ENCODE measurements at regions of chr12 and their contacts with region 1.

Region 1: GRCh38 chr12:117063162-117063911 is 35.9 kb downstream of the TESC start:
- DNase-seq: peak; percentile 88
- ATAC-seq: peak; percentile 78
- H3K4me3 Mint-ChIP-seq: peak overlapping the region; percentile 57
- H3K27ac Mint-ChIP-seq: peak overlapping the region; percentile 97
- H3K4me1 Mint-ChIP-seq: peaks cover 85% of the 10 kb centered on the region
- H3K27me3 Mint-ChIP-seq: no peaks in the 10 kb centered on the region

Region 2: GRCh38 chr12:117025481-117026151 is 37.7 kb before region 1 on chr12:
- CTCF ChIA-PET with region 1: interaction called, 11 read pairs
- POLR2A ChIA-PET with region 1: no interaction called
- DNase-seq: peak; percentile 67
- ATAC-seq: peak; percentile 84
- H3K4me3 Mint-ChIP-seq: no peak overlapping the region
- H3K27ac Mint-ChIP-seq: peak overlapping the region; percentile 87
- H3K4me1 Mint-ChIP-seq: peaks cover 11% of the 10 kb centered on the region
- H3K27me3 Mint-ChIP-seq: no peaks in the 10 kb centered on the region

Region 3: DNA sequence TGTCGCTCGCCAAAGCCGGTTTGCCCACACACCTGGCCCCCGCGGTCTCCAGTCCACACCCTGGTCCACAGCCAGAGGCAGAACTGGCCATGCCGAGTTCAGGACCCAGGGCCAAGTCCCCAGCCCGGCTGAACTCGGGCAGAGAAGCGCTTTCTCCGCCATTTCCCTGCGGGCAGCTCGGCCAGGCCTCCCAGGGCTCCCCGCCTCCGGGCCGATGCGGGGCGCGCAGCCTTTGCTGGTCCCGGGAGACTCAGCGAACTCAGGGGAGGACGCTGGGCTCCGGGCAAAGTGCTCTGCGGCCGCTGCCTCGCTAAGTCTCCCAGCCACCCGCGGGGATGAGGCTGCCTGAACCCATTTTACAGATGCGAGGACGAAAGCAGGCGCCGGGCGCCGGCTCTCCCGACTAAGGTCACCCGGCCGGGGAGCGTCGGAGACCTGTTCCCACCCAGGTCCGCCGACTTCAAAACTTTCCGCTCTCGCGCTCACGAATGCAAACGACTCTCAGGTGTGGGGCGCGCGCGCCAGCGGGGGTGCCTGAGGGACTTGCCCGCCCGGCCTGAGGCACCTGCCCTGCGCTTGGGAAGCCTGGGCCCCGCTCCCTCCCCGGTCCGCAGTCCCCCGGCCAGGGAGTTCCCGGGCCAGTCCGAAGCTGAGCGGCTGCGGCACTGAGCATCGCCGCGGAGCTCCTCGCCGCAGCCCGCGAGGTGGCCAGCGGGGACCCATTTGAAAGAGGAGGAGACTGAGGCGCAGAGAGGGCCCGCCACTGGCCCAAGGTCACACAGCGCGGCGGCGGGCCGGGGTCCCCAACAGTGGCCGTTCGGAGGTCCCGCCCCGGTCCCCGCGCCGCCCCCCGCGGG is 35.3 kb after region 1 on chr12:
- CTCF ChIA-PET with region 1: interaction called, 14 read pairs
- POLR2A ChIA-PET with region 1: interaction called, 6 read pairs
- DNase-seq: peak; percentile 66
- ATAC-seq: peak; percentile 51
- H3K4me3 Mint-ChIP-seq: peak overlapping the region; percentile 85
- H3K27ac Mint-ChIP-seq: peak overlapping the region; percentile 61
- H3K4me1 Mint-ChIP-seq: peaks cover 36% of the 10 kb centered on the region
- H3K27me3 Mint-ChIP-seq: peaks cover 12% of the 10 kb centered on the region